Posterior cingulate gyrus (tissue), 11 donors: ENCODE measurements at regions of chr9 and their contacts with region 1.

Region 1: GRCh38 chr9:13279284-13280141 is at the start of gene MPDZ:
- DNase-seq: peak; percentile 47 to 96 (median 68)

Region 2: DNA sequence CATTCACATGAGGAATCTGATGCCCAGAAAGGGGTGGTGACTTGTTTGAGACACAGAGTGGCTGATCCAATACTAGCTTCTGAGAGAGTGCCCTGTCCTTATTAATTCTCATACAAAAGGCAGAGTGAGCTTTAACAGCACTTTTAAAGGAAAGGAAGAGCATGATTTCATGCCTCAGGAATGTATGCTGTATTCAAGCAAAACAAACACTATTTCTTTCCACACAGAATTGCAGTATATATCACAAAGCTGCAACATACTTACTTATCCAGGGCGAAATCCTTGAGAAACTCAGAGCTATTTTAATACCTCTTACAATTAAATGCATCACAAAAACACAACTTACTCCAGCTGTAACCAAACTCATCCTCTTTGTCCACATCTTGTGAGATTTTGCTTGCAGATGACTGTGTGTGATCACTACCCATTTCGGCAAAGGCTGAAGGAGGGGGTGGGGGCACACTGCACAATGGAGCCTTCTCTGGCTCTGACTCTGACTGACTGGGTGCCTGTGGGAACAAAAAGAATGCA is 139.8 kb before region 1 on chr9:
- intact Hi-C with region 1: loop called (anchors 10 kb)
- DNase-seq: peak in 7 of 10 donors; percentile 12 to 91 (median 49)

Region 3: GRCh38 chr9:13213337-13213736 is 66.2 kb before region 1 on chr9:
- intact Hi-C with region 1: loop called (anchors 10 kb)
- DNase-seq: no peak